Transverse colon (tissue), 4 donors: ENCODE measurements at regions of chr1 and their contacts with region 1.

Region 1: DNA sequence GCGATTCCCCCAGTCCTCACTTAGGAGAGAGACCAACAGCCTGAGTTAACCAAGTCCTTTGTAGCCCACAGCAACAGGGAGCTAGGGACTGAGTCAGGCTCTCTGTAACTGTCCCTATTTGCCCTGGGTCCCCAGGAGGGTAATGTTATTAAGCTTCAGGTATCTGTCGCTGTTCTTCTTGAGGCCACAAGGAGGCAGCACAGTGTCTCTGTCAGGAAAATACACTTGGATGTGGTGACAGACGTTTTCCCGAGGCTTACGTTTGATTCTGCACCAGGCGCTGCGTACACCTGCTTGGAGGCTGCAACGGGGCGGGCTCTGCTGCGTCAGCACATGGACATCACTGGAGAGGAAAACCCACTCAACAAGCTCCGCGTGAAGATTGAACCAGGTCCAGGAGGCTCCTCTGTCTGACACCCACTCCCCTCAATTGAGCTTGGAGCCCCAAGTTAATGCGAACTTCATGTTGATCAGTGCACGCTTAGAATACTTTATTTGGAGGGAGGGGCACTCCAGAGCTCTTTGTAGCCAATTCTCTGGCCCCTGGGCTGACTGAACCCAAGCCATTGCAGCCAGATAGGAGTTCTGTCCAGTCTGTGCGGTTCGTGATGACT is 10.7 kb upstream of the ELF3 start:
- DNase-seq: peak; percentile 49
- H3K4me3 ChIP-seq: no peak overlapping the region
- H3K27ac ChIP-seq: no peak overlapping the region
- H3K4me1 ChIP-seq: no peaks in the 10 kb centered on the region
- H3K27me3 ChIP-seq: no peaks in the 10 kb centered on the region
- CTCF ChIP-seq: peak; percentile 64 to 80 (median 74)
- EP300 ChIP-seq: no peak
- POLR2A ChIP-seq: no peak

Region 2: DNA sequence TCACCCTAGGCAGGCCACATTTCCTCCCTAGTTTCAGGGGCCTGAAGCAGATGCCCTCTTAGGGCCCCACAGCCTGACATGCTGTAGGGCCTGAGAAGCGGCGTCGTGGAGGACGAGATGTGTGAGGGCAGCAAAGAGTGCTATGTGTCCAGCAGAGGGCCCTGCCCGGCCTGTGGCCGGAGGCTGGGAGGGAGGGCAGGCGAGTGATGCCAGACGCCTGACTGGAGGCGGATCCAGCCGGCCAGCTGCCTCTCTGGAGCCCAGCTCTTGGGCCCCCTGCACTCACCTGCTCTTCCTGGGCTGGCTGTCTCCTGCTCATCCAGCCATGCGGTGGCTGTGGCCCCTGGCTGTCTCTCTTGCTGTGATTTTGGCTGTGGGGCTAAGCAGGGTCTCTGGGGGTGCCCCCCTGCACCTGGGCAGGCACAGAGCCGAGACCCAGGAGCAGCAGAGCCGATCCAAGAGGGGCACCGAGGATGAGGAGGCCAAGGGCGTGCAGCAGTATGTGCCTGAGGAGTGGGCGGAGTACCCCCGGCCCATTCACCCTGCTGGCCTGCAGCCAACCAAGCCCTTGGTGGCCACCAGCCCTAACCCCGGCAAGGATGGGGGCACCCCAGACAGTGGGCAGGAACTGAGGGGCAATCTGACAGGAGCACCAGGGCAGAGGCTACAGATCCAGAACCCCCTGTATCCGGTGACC is 123.1 kb after region 1 on chr1 and contains the start of gene GPR37L1:
- in situ Hi-C with region 1: loop called in 1 of 4 experiments (anchors 10 kb)
- intact Hi-C with region 1: no loop called
- DNase-seq: no peak
- H3K4me3 ChIP-seq: no peak within 1 kb of the TSS
- H3K27ac ChIP-seq: no peak within 1 kb of the TSS
- H3K4me1 ChIP-seq: peaks cover 0 to 11% (median 0%) of the 10 kb centered on the region in 4 donors
- H3K27me3 ChIP-seq: no peaks in the 10 kb centered on the region
- CTCF ChIP-seq: peak in 2 of 5 experiments; percentile 7 to 10
- EP300 ChIP-seq: no peak
- POLR2A ChIP-seq: no peak
- total RNA-seq, gene GPR37L1: 0.55 to 0.95 TPM in 2 of 4 donors, not detected in the others